Activated T-helper 1 cell treated with anti-CD3 and anti-CD28 coated beads, Interleukin-12 subunit alpha, Interleukin-12 subunit beta, Interleukin-2, Interleukin-4 antibody, amounts not matched to agents 30 ng/mL and 10 ng/mL and 1 ng/mL, durations not matched to agents 14 hours and 24 hours and 36 hours (primary cell): ENCODE measurements at regions of chr6 and their contacts with region 1.

Region 1: DNA sequence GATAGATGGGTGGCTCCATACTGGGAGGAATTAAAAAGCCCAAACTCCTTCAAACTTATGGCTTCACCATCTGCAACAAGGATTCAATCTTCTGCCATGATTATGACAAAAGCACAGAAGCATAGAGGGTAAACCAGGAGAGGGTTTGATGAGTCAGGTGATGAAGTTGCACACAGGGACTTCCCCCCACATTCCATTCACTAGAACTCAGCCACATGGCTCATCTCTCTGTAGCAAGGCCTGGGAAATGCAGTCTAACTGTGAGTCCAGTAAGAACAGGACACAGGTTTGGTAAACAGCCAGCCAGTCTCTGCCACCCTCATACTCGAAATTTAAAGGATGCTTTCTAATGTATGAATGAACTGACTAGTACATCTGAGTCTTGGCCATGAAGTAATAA is 142.9 kb downstream of the HIVEP2 start:
- DNase-seq: no peak
- H3K4me3 Mint-ChIP-seq: peak overlapping the region; percentile 55
- H3K27ac Mint-ChIP-seq: peak overlapping the region; percentile 82
- H3K4me1 Mint-ChIP-seq: peaks cover 80% of the 10 kb centered on the region
- H3K27me3 Mint-ChIP-seq: no peaks in the 10 kb centered on the region

Region 2: DNA sequence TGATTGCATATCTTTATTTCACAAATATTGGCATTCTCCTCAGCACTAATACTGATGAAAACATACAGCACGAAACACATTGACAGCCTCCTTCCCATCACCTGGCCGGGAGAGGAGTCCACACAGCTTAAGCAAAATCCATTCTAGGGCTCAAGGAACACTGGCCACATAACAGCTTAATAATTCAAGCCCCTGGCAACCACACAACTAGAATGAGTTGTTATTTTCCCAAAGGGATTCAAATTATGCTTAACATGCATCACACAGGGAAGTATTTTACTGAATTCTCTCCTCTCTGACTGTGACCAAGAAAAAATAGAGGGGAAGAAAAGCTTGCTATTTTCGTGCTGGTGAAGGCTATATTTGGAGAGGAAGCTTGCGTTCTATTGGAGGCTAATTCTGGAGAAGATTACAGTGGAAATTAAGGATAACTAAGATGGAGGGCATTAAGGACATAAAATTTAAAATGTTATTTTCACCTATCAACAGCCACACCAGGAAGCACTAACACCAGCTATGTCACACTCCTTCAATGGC is 301.8 kb before region 1 on chr6:
- intact Hi-C with region 1: no loop called
- DNase-seq: no peak
- H3K4me3 Mint-ChIP-seq: no peak overlapping the region
- H3K27ac Mint-ChIP-seq: no peak overlapping the region
- H3K4me1 Mint-ChIP-seq: no peaks in the 10 kb centered on the region
- H3K27me3 Mint-ChIP-seq: no peaks in the 10 kb centered on the region

Region 3: GRCh38 chr6:142756215-142756634 is 45.9 kb before region 1 on chr6:
- intact Hi-C with region 1: no loop called
- DNase-seq: no peak
- H3K4me3 Mint-ChIP-seq: no peak overlapping the region
- H3K27ac Mint-ChIP-seq: no peak overlapping the region
- H3K4me1 Mint-ChIP-seq: peaks cover 21% of the 10 kb centered on the region
- H3K27me3 Mint-ChIP-seq: no peaks in the 10 kb centered on the region

Region 4: DNA sequence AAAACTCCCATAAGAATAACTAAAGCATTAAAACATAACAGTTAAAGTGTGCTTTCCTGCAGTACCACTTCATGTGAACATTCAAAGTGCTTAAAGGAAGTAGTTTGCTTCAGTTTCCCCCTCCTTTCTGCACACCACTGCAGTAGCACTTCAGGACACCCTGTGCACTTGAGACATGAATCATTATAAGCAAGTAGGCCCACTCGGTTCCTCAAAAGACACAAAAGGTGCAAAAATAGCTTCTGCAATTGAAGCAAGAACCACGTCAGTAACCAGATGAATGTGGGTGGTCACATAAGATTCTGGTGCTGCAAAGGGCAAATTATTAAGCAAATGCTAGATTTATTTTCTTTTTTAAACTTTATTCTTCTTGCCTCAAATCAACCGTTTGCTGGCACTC is 17.8 kb before region 1 on chr6:
- intact Hi-C with region 1: loop called (anchors 1 kb)
- DNase-seq: no peak
- H3K4me3 Mint-ChIP-seq: peak overlapping the region; percentile 55
- H3K27ac Mint-ChIP-seq: peak overlapping the region; percentile 70
- H3K4me1 Mint-ChIP-seq: peaks cover 44% of the 10 kb centered on the region
- H3K27me3 Mint-ChIP-seq: no peaks in the 10 kb centered on the region

Region 5: DNA sequence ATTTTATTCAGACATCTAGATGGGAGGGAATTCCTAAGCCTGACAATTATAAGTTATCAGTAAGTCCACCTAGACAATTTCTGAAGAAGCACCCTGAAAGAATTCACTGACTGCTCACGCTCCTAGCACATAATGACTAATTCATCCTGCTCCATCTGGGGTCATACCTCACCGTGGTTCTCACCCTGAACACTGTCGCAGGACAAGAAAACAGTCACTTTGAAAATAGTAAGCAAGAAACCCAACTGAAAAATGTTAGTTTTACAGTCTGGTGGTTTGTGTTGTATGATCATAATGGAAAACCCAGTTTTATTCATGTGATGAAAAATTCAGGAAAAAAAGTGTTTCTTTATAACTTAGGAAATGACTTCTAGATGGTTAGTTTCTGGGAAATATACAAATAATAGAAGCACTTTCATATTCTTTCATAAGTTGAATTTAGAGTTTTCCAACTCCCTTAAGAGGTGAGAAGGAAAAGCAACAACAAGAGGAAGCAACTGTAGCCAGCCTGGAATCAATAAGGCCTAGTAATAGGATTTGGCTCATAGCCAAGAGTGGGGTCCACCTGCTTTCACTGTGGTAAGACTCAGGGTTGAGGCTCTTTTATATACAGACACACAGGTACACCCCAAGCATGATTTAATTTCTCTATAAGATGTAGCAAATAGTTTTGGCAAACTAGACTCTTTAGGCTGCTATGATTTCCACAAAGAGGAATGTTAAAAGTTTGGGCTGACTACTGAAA is 48.7 kb after region 1 on chr6:
- intact Hi-C with region 1: loop called (anchors 2 kb)
- DNase-seq: peak; percentile 41
- H3K4me3 Mint-ChIP-seq: peak overlapping the region; percentile 40
- H3K27ac Mint-ChIP-seq: peak overlapping the region; percentile 89
- H3K4me1 Mint-ChIP-seq: peaks cover 91% of the 10 kb centered on the region
- H3K27me3 Mint-ChIP-seq: no peaks in the 10 kb centered on the region